ENCODE measurements at regions of chr20 and their contacts with region 1.

Region 1: DNA sequence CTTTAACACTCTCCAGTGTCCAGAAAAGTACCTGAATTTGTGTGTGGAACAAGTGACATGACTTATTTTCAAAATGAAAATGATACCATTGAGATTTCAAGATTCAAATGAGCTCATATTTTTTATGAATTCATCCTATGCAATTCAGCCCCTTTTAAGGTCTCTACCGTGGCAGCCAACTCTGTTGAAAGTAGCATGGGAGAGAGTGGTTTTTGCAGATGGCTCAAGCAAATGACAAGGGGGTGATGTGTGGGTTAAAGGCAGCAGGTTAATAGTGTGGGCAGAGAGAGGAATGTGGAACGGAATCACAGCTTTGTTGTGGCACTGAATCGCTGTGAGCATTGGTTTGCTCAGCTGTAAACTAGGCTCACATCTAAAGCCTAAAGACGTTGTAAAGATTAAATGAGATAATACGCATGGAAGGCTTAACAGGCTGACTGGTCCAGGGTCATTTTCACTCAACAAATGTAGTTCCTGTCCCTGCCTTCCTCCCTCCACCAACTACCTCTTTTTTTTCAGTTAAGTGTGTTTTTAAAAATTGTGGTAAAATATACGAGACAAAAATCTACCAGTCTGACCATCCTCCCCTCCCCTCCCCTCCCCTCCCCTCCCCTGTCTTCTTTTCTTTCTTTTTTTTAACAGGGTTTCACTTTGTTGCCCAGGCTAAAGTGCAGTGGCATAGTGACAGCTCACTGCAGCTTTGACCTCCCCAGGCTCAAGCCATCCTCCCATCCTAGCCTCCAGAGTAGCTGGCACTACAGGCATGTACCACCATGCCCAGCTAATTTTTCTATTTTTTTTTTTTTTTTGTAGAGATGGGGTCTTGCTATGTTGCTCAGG is 114.7 kb upstream of the ZNF217 start:
- DNase-seq: peak; percentile 58
- H3K4me3 Mint-ChIP-seq: peak overlapping the region; percentile 64
- H3K27ac Mint-ChIP-seq: peak overlapping the region; percentile 90
- H3K4me1 Mint-ChIP-seq: peaks cover 53% of the 10 kb centered on the region
- H3K27me3 Mint-ChIP-seq: no peaks in the 10 kb centered on the region

Region 2: DNA sequence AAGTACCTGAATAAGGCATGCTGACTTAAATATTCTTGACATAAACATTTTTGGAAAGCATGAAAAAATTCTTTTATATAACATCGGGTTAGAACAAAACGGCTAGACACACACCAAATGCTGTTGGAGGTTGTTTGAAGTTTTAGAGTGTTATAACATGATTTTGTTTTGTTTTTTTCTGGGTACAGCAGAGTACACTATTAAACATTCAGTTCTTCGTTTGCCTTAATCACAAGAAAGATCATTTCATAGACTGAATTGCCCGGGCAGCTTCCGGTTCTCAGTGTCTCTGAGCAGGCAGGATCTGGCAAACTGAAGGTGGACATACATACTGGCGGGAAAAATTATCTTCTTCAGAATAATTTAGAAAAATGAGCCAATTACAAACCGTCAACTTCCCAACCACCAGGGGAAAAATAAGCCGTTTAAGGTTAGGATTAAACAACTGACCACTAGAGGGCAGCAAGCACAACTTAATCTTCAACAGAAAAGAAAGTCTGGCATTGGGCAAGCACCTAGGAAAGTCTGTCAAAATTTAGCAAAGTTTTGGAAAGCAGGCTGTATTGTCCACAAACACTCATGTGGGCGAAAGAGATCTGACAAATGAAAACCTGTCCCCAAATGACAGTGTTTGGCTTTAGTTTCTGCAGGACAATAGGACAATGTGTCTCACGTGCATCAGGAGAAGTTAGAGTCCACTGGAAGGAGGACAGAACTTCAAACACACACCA is 129.7 kb before region 1 on chr20:
- CTCF ChIA-PET with region 1: interaction called, 4 read pairs
- intact Hi-C with region 1: loop called (anchors 1 kb)
- DNase-seq: peak; percentile 77
- H3K4me3 Mint-ChIP-seq: peak overlapping the region; percentile 71
- H3K27ac Mint-ChIP-seq: peak overlapping the region; percentile 92
- H3K4me1 Mint-ChIP-seq: peaks cover 90% of the 10 kb centered on the region
- H3K27me3 Mint-ChIP-seq: no peaks in the 10 kb centered on the region

Region 3: DNA sequence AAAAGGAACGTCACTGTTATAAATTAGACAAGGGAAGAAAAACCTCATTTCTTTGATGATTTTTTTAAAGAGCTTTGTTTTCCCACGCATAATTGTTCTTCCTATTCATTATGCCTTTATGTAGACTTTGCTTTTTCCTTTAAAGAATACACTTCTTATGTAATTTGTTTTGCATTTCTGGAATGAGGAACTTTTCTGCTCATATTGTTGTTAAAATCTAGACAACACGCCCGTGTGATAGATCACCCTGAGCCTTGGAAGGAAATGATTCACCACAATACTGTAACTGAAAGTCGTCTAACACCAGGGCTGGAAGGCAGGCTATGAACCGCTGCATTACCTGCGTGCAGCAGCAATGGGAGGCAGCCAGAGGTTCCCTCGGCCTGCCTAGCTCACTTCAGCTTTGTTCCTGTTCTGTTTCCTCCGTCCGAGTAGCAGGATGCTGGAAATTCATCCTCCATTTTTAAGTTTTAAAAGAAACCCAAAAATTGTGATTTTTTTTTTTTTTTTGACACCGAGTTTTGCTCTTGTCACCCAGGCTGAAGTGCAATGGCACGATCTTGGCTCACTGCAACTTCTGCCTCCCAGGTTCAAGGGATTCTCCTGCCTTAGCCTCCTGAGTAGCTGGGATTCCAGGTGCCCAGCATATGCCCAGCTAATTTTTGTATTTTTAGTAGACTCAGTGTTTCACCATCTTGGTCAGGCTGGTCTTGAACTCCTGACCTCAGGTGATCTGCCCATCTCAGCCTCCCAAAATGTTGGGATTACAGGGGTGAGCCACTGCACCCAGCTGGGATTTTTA is 65.1 kb before region 1 on chr20:
- CTCF ChIA-PET with region 1: interaction called, 5 read pairs
- intact Hi-C with region 1: loop called (anchors 1 kb)
- DNase-seq: peak; percentile 82
- H3K4me3 Mint-ChIP-seq: peak overlapping the region; percentile 66
- H3K27ac Mint-ChIP-seq: peak overlapping the region; percentile 85
- H3K4me1 Mint-ChIP-seq: peaks cover 40% of the 10 kb centered on the region
- H3K27me3 Mint-ChIP-seq: no peaks in the 10 kb centered on the region

Region 4: GRCh38 chr20:53692413-53693067 is 15.8 kb before region 1 on chr20:
- CTCF ChIA-PET with region 1: interaction called, 5 read pairs
- intact Hi-C with region 1: loop called (anchors 1 kb)
- DNase-seq: no peak
- H3K4me3 Mint-ChIP-seq: peak overlapping the region; percentile 17
- H3K27ac Mint-ChIP-seq: no peak overlapping the region
- H3K4me1 Mint-ChIP-seq: peaks cover 38% of the 10 kb centered on the region
- H3K27me3 Mint-ChIP-seq: no peaks in the 10 kb centered on the region

Region 5: GRCh38 chr20:53750827-53751619 is 42.7 kb after region 1 on chr20:
- CTCF ChIA-PET with region 1: interaction called, 3 read pairs
- intact Hi-C with region 1: loop called (anchors 1 kb)
- DNase-seq: peak; percentile 66
- H3K4me3 Mint-ChIP-seq: peak overlapping the region; percentile 32
- H3K27ac Mint-ChIP-seq: peak overlapping the region; percentile 91
- H3K4me1 Mint-ChIP-seq: peaks cover 71% of the 10 kb centered on the region
- H3K27me3 Mint-ChIP-seq: no peaks in the 10 kb centered on the region

Region 6: DNA sequence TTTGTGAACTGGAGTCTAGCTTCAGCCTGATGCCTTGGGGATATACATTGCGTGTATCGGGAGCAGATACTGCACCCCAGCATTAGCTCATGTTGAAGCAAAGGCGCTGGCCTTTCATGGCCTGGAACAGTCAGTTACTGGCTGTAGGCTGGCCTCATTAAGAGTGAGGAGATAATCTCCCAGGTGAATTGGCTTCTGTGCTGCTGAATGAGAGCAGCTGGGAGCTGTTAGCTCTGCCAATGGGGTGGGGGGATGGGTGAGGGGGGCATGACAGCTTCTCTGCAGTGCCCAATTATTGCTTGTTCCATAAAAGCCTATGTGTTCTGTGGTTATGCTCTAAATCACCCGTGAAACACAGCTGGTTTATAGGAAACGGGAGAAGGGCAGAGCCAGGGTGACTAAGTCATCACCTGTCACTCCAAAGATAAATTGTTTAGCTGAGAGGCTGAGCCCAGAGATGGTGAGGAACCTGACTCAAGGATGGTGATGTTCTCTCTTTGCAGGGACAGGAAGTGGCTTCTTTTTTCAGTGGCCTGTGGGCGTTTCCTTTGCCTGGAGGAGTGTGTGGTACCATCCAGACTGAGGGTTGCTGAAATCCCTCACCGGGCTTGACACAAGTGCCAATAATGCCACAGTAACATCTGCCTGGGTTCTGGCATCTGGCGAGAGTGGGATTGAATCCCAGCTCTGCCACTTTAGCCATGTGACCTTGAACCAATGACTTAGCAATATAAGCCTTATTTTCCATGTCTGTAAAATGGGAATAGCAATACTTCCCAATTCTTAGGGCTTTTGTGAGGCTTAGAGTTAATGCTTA is 191.2 kb after region 1 on chr20:
- CTCF ChIA-PET with region 1: no interaction called
- intact Hi-C with region 1: loop called (anchors 2 kb)
- DNase-seq: peak; percentile 94
- H3K4me3 Mint-ChIP-seq: no peak overlapping the region
- H3K27ac Mint-ChIP-seq: peak overlapping the region; percentile 85
- H3K4me1 Mint-ChIP-seq: peaks cover 49% of the 10 kb centered on the region
- H3K27me3 Mint-ChIP-seq: no peaks in the 10 kb centered on the region